Esophagus muscularis mucosa (tissue), 4 donors: ENCODE measurements at regions of chr20 and their contacts with region 1.

Region 1: DNA sequence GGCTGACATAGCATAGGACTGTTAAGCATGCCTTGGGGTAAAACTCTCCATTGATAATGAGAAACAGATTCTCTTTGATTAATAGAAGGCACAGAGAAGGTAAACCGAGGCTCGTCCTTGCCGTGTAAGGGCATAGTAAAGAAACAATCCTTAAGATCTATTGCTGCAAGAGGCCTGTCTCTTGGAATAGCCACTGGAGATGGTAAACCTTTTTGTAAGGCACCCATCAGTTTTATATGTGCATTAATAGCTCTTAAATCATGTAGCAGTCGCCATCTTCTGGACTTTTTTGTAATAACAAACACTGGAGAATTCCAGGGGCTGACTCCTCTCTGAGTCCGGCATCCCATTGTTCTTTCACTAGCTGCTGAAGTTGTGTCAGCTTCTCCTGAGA is 8.4 kb upstream of the ABHD12 start:
- DNase-seq: no peak
- H3K4me3 ChIP-seq: no peak overlapping the region
- H3K27ac ChIP-seq: no peak overlapping the region
- H3K4me1 ChIP-seq: peaks cover 0 to 4% (median 0%) of the 10 kb centered on the region in 4 donors
- H3K27me3 ChIP-seq: no peaks in the 10 kb centered on the region
- CTCF ChIP-seq: peak; percentile 50 to 66 (median 65)
- EP300 ChIP-seq: no peak
- POLR2A ChIP-seq: no peak

Region 2: DNA sequence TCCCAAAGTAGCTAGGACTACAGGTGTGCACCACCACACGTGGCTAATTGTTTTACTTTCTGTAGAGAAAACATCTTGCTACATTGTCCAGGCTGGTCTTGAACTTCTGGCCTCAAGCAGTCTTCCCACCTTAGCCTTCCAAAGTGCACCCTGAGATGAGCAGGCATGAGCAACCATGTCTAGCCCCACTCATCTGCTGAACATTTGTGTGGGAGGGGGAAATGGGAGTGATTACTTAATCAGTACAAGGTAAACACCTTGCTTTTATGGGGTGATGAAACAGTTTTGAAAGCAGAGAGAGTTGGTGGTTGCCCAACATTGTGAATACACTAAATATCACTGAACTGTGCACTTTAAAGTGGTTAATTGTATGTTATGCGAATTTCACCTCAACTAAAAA is 411.8 kb before region 1 on chr20:
- intact Hi-C with region 1: loop called (anchors 5 kb)
- DNase-seq: no peak
- H3K4me3 ChIP-seq: no peak overlapping the region
- H3K27ac ChIP-seq: no peak overlapping the region
- H3K4me1 ChIP-seq: peaks cover 15 to 39% (median 23%) of the 10 kb centered on the region in 4 donors
- H3K27me3 ChIP-seq: no peaks in the 10 kb centered on the region
- CTCF ChIP-seq: no peak
- EP300 ChIP-seq: no peak
- POLR2A ChIP-seq: no peak

Region 3: DNA sequence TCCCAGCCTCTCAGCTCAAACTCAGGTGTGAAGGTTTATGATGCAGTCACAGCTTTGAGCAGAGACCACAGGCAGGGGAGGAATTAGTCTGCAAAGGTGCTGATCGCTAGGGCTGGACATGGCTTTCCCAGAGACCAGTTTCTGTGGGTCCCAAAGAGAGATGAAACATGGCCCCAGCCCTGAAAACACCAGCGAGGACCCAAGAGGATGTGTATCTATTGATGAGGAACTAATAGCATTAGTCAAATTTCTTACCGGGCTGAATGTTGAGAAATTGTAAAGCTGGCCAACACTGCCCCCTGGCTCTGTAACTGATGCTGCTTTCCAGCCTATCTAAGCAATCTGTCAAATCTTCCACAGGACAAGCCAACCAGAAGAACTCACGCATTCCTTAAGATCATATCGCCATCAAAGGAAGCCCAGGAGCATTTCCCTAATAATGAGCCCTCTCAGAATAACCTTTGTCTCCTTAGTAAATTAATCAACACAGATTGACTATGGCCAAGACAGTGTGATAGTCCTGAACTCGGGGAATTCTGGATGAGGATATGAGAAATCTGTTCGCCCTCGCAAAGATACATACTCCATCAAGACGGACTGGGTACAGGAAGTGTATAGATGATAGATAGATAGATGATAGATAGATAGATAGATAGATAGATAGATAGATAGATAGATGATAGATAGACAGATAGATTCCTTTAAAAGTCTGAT is 333.3 kb before region 1 on chr20:
- intact Hi-C with region 1: loop called (anchors 5 kb)
- DNase-seq: no peak
- H3K4me3 ChIP-seq: no peak overlapping the region
- H3K27ac ChIP-seq: no peak overlapping the region
- H3K4me1 ChIP-seq: peaks cover 8 to 15% (median 10%) of the 10 kb centered on the region in 4 donors
- H3K27me3 ChIP-seq: peaks cover 0 to 10% (median 0%) of the 10 kb centered on the region in 4 donors
- CTCF ChIP-seq: peak; percentile 78 to 86 (median 81)
- EP300 ChIP-seq: no peak
- POLR2A ChIP-seq: no peak

Region 4: GRCh38 chr20:25294459-25295385 is 104.3 kb before region 1 on chr20:
- intact Hi-C with region 1: loop called (anchors 5 kb)
- DNase-seq: no peak
- H3K4me3 ChIP-seq: no peak overlapping the region
- H3K27ac ChIP-seq: peak overlapping the region; percentile 72 to 77 (median 74)
- H3K4me1 ChIP-seq: peaks cover 42 to 68% (median 57%) of the 10 kb centered on the region in 4 donors
- H3K27me3 ChIP-seq: no peaks in the 10 kb centered on the region
- CTCF ChIP-seq: peak; percentile 61 to 69 (median 68)
- EP300 ChIP-seq: no peak
- POLR2A ChIP-seq: no peak

Region 5: GRCh38 chr20:25310268-25310920 is 88.6 kb before region 1 on chr20:
- intact Hi-C with region 1: loop called (anchors 5 kb)
- DNase-seq: no peak
- H3K4me3 ChIP-seq: peak overlapping the region in 3 of 4 donors; percentile 20 to 41 (median 36)
- H3K27ac ChIP-seq: peak overlapping the region; percentile 67 to 79 (median 71)
- H3K4me1 ChIP-seq: peaks cover 23 to 34% (median 29%) of the 10 kb centered on the region in 4 donors
- H3K27me3 ChIP-seq: no peaks in the 10 kb centered on the region
- CTCF ChIP-seq: peak; percentile 34 to 54 (median 51)
- EP300 ChIP-seq: no peak
- POLR2A ChIP-seq: no peak

Region 6: GRCh38 chr20:25486377-25486776 is 87.3 kb after region 1 on chr20:
- intact Hi-C with region 1: no loop called
- DNase-seq: no peak
- H3K4me3 ChIP-seq: no peak overlapping the region
- H3K27ac ChIP-seq: no peak overlapping the region
- H3K4me1 ChIP-seq: peaks cover 0 to 3% (median 0%) of the 10 kb centered on the region in 4 donors
- H3K27me3 ChIP-seq: no peaks in the 10 kb centered on the region
- CTCF ChIP-seq: no peak
- EP300 ChIP-seq: no peak
- POLR2A ChIP-seq: no peak